Caki2 (cell line): ENCODE measurements at regions of chr2 and their contacts with region 1.

Region 1: GRCh38 chr2:39216346-39217191 is 27.2 kb downstream of the CDKL4 start:
- DNase-seq: no peak

Region 2: GRCh38 chr2:38797276-38797675 is 419.3 kb before region 1 on chr2:
- in situ Hi-C with region 1: no loop called
- DNase-seq: peak; percentile 91

Region 3: DNA sequence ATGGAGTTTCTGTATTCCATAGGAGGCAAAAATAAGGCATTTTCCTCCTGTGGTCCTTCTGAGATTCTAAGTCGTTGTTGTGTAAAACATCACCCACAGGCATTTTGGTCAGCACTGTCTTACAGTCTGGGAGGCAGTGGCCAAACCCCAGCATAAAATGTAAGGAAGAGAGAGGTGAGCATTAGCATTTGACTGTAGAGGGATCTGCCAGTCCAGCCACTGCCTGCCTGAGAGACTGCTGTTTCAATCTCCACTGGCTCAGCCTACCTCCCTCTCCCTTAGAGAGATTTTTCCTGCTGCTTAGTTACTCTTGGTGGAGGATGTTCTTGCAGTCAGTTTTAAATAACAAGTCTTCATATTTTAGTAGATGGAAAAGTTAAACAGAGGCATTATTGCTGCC is 249.9 kb before region 1 on chr2:
- in situ Hi-C with region 1: no loop called
- DNase-seq: no peak

Region 4: GRCh38 chr2:39059366-39059952 is 157.1 kb before region 1 on chr2:
- in situ Hi-C with region 1: loop called (anchors 25 kb)
- DNase-seq: peak; percentile 18